HEK293 (cell line): ENCODE measurements at regions of chr14 and their contacts with region 1.

Region 1: GRCh38 chr14:49461529-49462401 is 124.4 kb downstream of the RPS29 start:
- H3K4me3 ChIP-seq: no peak overlapping the region
- H3K27ac ChIP-seq: no peak overlapping the region
- H3K4me1 ChIP-seq: no peaks in the 10 kb centered on the region
- CTCF ChIP-seq: no peak

Region 2: DNA sequence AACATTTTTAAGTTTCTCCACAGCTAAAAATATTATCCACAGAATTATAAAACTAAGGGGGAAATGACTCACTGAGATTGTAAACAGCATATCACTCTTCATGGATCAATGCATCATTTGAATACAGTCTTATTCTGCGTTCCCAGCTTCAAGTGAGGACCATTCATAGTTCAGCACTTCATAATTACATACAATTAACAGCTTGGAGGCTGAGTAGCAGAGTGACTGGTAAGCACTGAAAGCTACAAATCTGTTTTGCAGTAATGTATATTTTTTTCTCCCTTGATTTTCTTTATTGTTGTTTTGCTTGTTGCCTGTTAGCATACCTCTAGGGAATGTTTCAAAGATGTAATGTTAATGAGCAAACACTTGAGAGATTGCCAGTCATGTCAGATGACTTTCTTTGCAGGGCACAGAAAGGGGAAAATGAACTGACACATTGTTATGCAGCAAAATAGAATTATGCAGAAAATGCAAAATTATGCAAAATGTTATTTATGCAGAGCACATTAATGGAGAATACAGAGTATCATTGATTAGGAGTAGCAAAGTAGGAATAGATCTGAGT is 14.1 kb before region 1 on chr14:
- CTCF ChIA-PET with region 1: interaction called, 40 read pairs
- POLR2A ChIA-PET with region 1: no interaction called
- H3K4me3 ChIP-seq: no peak overlapping the region
- H3K27ac ChIP-seq: no peak overlapping the region
- H3K4me1 ChIP-seq: no peaks in the 10 kb centered on the region
- CTCF ChIP-seq: no peak

Region 3: DNA sequence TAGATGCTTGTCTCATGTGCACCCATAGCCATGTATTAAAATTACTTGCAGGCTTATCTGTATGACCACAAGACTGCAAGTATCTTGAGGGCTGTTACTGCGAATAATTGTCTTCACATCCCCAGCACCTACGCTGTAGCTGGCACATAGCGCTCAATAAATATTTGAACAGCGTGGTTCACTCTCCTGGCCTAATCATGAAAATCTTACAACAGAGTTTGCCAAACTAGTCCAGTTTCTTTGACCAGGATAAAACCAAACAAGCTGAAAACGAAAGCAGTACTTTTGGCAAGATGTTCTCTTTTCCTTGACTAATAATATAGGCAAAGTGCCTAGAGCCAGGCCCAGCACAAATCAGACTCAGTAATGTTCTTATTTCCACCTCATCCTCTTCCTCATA is 17.7 kb after region 1 on chr14:
- CTCF ChIA-PET with region 1: interaction called, 15 read pairs
- POLR2A ChIA-PET with region 1: no interaction called
- H3K4me3 ChIP-seq: no peak overlapping the region
- H3K27ac ChIP-seq: no peak overlapping the region
- H3K4me1 ChIP-seq: no peaks in the 10 kb centered on the region
- CTCF ChIP-seq: no peak

Region 4: GRCh38 chr14:49497725-49498348 is 36.1 kb after region 1 on chr14:
- CTCF ChIA-PET with region 1: interaction called, 109 read pairs
- POLR2A ChIA-PET with region 1: interaction called, 4 read pairs
- H3K4me3 ChIP-seq: no peak overlapping the region
- H3K27ac ChIP-seq: no peak overlapping the region
- H3K4me1 ChIP-seq: no peaks in the 10 kb centered on the region
- CTCF ChIP-seq: no peak

Region 5: DNA sequence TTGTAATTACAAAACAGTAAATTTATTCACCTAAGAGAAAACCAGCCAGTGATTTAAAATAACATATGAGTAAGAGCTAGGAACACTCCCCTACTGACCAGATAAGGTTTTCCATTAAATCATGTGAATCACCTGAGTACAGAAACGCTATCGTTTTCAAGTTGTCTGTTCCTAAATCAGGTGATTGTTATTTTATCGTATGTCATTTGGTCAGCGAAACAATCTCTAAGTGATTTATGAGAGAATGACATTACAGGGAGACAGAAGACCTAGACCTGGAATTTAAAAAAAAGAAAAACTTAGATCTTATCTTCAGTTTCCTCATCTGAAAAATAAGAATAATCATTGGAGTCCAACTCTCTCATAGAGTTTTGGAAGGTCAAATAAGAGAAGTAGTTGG is 77.2 kb after region 1 on chr14:
- CTCF ChIA-PET with region 1: interaction called, 10 read pairs
- POLR2A ChIA-PET with region 1: no interaction called
- H3K4me3 ChIP-seq: no peak overlapping the region
- H3K27ac ChIP-seq: no peak overlapping the region
- H3K4me1 ChIP-seq: no peaks in the 10 kb centered on the region
- CTCF ChIP-seq: no peak

Region 6: DNA sequence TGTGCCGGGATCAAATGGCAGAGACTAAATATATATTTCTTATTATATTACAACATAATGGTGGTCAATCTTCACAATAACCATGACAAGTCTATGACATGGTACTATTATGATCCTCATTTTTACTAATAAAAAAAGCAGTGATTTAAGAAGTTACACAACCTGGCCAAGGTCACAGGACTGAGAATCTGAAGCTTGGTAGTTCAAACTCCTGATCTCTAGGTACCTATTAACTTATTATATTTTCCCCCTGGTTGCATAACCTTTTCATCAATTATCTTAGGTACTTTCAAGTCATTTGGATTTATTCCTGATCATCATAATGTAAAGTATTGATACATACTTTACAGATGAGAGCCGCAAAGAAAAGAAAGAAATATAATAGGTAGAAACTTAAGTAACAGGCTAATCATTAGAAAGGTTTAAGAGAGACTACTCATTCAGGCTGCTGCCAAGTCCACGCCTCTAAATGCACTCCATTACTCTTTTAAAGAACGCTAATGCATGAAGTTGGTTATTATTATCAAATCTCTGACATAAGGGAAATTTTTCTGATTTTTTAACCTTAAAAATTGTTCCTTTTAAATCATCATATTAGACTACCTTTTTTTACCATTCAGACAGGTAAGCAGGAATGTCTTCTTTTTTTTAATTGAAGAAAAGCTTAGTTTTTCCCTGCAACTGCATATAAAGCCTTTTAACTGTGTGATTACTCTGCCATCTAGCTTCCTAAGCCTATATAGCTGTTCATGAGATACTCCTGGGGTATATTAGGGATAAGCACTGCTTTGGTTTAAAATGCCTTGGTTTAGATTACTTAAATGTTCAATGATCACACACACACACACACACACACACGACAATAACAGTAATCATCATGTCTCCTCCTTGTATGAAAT is 88.8 kb after region 1 on chr14:
- CTCF ChIA-PET with region 1: interaction called, 71 read pairs
- POLR2A ChIA-PET with region 1: no interaction called
- H3K4me3 ChIP-seq: no peak overlapping the region
- H3K27ac ChIP-seq: no peak overlapping the region
- H3K4me1 ChIP-seq: no peaks in the 10 kb centered on the region
- CTCF ChIP-seq: 0 out of 2 replicates have a peak, but pooled peaks have one; percentile 14

Region 7: GRCh38 chr14:49820176-49820575 is 358.4 kb after region 1 on chr14:
- CTCF ChIA-PET with region 1: interaction called, 10 read pairs
- POLR2A ChIA-PET with region 1: no interaction called
- H3K4me3 ChIP-seq: no peak overlapping the region
- H3K27ac ChIP-seq: no peak overlapping the region
- H3K4me1 ChIP-seq: no peaks in the 10 kb centered on the region
- CTCF ChIP-seq: no peak